ENCODE measurements at regions of chr14 and their contacts with region 1.

Region 1: DNA sequence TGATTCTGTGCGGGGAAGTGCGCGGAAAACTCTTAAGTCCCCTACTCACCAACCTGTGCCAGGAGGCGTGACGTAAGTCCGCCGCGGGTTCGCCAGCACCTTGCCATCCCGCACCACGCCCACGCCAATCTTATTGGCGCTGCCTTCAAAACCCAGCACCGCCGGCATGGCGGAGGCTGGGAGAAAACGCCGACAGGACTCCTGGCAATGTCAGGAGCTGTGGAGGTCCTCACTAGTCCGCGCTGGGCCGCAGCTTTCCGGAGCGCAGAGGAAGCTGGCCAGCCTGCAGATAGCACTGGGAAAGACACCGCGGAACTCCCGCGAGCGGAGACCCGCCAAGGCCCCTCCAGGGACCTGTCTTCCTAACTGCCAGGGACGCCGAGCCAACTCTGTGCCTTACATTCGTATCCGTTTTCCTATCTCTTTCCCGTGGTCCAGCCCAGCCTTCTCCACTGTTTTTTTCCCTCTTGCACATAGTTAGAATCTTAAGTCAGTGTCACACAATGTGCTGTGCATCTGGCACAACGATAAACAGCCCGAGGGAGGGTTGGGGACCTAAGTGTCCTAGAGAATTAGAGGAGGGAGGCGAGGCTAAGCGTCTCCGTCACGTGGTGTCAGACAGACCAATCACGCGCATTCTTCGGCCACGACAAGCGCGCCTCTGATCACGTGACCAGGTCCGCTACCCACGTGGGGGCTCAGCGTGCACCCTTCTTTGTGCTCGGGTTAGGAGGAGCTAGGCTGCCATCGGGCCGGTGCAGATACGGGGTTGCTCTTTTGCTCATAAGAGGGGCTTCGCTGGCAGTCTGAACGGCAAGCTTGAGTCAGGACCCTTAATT is at the starts of genes APEX1 and OSGEP:
- DNase-seq: peak; percentile 99
- ATAC-seq: peak; percentile 91
- H3K4me3 Mint-ChIP-seq: no peak within 1 kb of the TSS
- H3K27ac Mint-ChIP-seq: no peak within 1 kb of the TSS
- H3K4me1 Mint-ChIP-seq: peaks cover 19% of the 10 kb centered on the region
- H3K27me3 Mint-ChIP-seq: no peaks in the 10 kb centered on the region
- CTCF ChIP-seq: no peak
- total RNA-seq, gene APEX1: 196 to 211 TPM
- total RNA-seq, gene OSGEP: 39.5 to 40.7 TPM

Region 2: GRCh38 chr14:20421267-20421666 is 33.5 kb before region 1 on chr14:
- CTCF ChIA-PET with region 1: interaction called, 72 read pairs
- POLR2A ChIA-PET with region 1: interaction called, 43 read pairs
- intact Hi-C with region 1: no loop called
- DNase-seq: no peak
- ATAC-seq: no peak
- H3K4me3 Mint-ChIP-seq: no peak overlapping the region
- H3K27ac Mint-ChIP-seq: no peak overlapping the region
- H3K4me1 Mint-ChIP-seq: peaks cover 11% of the 10 kb centered on the region
- H3K27me3 Mint-ChIP-seq: no peaks in the 10 kb centered on the region
- CTCF ChIP-seq: no peak

Region 3: GRCh38 chr14:20427231-20428009 is 27.3 kb before region 1 on chr14:
- CTCF ChIA-PET with region 1: interaction called, 3 read pairs
- POLR2A ChIA-PET with region 1: interaction called, 14 read pairs
- intact Hi-C with region 1: no loop called
- DNase-seq: peak; percentile 26
- ATAC-seq: peak; percentile 72
- H3K4me3 Mint-ChIP-seq: peak overlapping the region; percentile 63
- H3K27ac Mint-ChIP-seq: peak overlapping the region; percentile 91
- H3K4me1 Mint-ChIP-seq: peaks cover 42% of the 10 kb centered on the region
- H3K27me3 Mint-ChIP-seq: no peaks in the 10 kb centered on the region
- CTCF ChIP-seq: no peak

Region 4: GRCh38 chr14:20440882-20441281 is 13.9 kb before region 1 on chr14:
- CTCF ChIA-PET with region 1: interaction called, 3 read pairs
- POLR2A ChIA-PET with region 1: interaction called, 13 read pairs
- intact Hi-C with region 1: no loop called
- DNase-seq: peak; percentile 70
- ATAC-seq: peak; percentile 95
- H3K4me3 Mint-ChIP-seq: peak overlapping the region; percentile 51
- H3K27ac Mint-ChIP-seq: peak overlapping the region; percentile 82
- H3K4me1 Mint-ChIP-seq: peaks cover 22% of the 10 kb centered on the region
- H3K27me3 Mint-ChIP-seq: no peaks in the 10 kb centered on the region
- CTCF ChIP-seq: no peak

Region 5: DNA sequence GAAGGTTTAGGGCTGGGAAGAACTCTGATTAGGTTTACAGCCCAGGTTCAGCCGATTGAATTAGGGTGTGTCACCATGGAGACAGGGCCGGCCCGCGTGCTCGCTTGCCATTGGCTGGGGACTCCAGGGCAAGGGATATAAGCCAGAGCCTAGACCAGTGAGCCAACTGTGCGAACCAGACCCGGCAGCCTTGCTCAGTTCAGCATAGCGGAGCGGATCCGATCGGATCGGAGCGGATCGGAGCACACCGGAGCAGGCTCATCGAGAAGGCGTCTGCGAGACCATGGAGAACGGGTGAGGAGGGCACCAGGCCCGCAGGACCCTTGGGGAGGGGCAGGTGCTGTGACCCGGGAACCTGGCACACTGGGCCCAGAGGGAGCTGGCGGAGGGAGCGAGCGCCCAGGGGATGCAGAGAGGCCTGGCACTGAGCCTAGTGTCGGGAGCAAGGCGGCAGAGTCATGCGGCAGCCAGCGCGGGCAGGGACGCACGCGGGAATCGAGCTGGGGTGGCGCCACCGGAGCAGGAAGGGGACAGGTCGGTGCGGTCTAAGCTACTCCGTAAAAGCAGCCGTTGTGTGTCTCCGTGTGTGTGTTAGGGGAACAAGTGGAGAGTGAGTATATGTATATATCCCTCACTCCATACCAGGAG is 14.6 kb after region 1 on chr14 and contains the start of gene PNP:
- CTCF ChIA-PET with region 1: interaction called, 4 read pairs
- POLR2A ChIA-PET with region 1: interaction called, 41 read pairs
- intact Hi-C with region 1: no loop called
- DNase-seq: peak; percentile 92
- ATAC-seq: peak; percentile 94
- H3K4me3 Mint-ChIP-seq: peak within 1 kb of the TSS; percentile 86
- H3K27ac Mint-ChIP-seq: peak within 1 kb of the TSS; percentile 93
- H3K4me1 Mint-ChIP-seq: peaks cover 33% of the 10 kb centered on the region
- H3K27me3 Mint-ChIP-seq: no peaks in the 10 kb centered on the region
- CTCF ChIP-seq: no peak
- total RNA-seq, gene PNP: 176 to 183 TPM

Region 6: GRCh38 chr14:20830831-20831230 is 376.1 kb after region 1 on chr14:
- CTCF ChIA-PET with region 1: no interaction called
- POLR2A ChIA-PET with region 1: no interaction called
- intact Hi-C with region 1: no loop called
- DNase-seq: no peak
- ATAC-seq: no peak
- H3K4me3 Mint-ChIP-seq: no peak overlapping the region
- H3K27ac Mint-ChIP-seq: no peak overlapping the region
- H3K4me1 Mint-ChIP-seq: no peaks in the 10 kb centered on the region
- H3K27me3 Mint-ChIP-seq: no peaks in the 10 kb centered on the region
- CTCF ChIP-seq: no peak

Measured in activated CD8-positive, alpha-beta T cell treated with anti-CD3 and anti-CD28 coated beads for 36 hours (primary cell).